ENCODE measurements at regions of chr7 and their contacts with region 1.

Region 1: DNA sequence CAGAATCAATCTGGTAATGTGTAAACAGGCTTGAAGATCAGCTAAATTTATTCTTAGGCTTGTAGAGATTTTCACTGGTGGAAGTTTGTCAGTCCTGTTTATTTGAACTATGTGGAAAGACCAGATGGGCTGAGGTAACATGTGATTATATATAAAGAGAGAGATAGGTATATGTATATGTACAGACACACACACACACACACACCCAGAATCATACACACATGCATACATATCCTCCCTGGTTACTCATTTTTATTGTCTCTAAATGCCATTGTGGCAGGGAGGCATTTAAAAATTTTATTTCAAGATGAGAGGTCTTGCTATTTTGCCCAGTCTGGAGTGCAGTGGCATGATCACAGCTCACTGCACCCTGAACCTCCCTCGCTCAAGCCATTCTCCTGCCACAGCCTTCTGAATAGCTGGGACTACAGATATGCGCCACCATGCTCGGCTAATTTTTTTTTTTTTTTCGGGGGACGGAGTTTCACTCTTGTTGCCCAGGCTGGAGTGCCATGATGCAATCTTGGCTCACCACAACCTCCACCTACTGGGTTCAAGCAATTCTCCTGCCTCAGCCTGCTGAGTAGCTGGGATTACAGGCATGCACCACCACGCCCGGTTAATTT is 78.1 kb upstream of the CYTH3 start:
- DNase-seq: no peak
- ATAC-seq: no peak
- H3K4me3 ChIP-seq: no peak overlapping the region
- H3K27ac ChIP-seq: peak overlapping the region in 1 of 12 donors; percentile 90
- H3K4me1 ChIP-seq: peaks cover 0 to 40% (median 6%) of the 10 kb centered on the region in 12 donors
- H3K27me3 ChIP-seq: no peaks in the 10 kb centered on the region
- CTCF ChIP-seq: no peak
- POLR2A ChIP-seq: no peak

Region 2: GRCh38 chr7:6395898-6396595 is 45.5 kb after region 1 on chr7:
- intact Hi-C with region 1: no loop called
- DNase-seq: peak in 3 of 5 donors; percentile 38 to 65 (median 51)
- ATAC-seq: peak; percentile 47 to 71 (median 58)
- H3K4me3 ChIP-seq: peak overlapping the region in 5 of 12 donors; percentile 1 to 28 (median 18)
- H3K27ac ChIP-seq: peak overlapping the region; percentile 6 to 88 (median 50)
- H3K4me1 ChIP-seq: peaks cover 17 to 93% (median 79%) of the 10 kb centered on the region in 12 donors
- H3K27me3 ChIP-seq: no peaks in the 10 kb centered on the region
- CTCF ChIP-seq: no peak
- POLR2A ChIP-seq: no peak

Region 3: DNA sequence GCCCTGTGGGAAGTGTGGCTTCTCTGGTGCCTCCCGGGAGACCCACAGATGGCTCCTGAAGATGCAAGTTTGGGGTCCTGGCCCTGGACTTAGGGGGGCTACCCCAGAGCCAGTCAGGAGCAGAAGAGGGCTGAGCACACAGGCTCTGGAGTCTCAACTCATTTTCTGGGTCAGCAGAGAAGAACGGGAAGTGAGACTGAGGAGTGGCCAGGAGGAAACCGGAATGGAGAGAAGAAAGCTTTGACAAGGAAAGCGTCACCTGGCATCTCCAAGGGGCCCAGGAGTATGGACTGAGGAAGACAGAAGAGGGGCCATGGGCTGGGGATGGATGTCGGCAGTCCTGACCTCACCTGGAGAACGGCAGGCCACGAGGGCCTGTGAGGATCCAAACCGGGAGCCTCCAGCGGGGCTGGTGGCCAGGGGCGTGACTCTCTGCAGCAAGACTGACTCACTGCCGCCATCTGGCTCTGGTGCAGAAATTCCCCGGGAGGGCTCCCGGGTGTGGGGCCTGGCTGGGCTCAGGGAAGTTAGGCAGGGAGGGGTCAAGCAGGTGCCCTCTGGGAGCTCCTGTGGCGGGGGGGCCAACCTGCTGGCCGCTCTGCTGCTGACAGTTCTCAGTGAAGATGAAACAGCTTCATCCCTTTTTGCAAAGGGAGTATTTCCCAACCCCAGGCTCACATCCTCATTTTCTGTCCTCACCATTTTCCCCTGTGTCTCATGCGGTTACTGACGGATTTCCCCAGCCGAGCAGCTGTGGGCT is 73.6 kb after region 1 on chr7:
- intact Hi-C with region 1: loop called in 1 of 10 experiments (anchors 5 kb)
- DNase-seq: peak in 4 of 5 donors; percentile 37 to 73 (median 42)
- ATAC-seq: peak in 3 of 4 donors; percentile 35 to 53 (median 50)
- H3K4me3 ChIP-seq: peak overlapping the region in 1 of 12 donors; percentile 6
- H3K27ac ChIP-seq: peak overlapping the region in 8 of 12 donors; percentile 27 to 89 (median 40)
- H3K4me1 ChIP-seq: peaks cover 0 to 28% (median 0%) of the 10 kb centered on the region in 12 donors
- H3K27me3 ChIP-seq: no peaks in the 10 kb centered on the region
- CTCF ChIP-seq: no peak
- POLR2A ChIP-seq: no peak

Measured in heart left ventricle (tissue), 16 donors.